ENCODE measurements at regions of chr1 and their contacts with region 1.

Region 1: GRCh38 chr1:45589861-45590260 is 6.0 kb downstream of the NASP start:
- DNase-seq: no peak
- H3K4me3 ChIP-seq: no peak overlapping the region
- H3K27ac ChIP-seq: peak overlapping the region; percentile 2
- H3K4me1 ChIP-seq: peaks cover 19% of the 10 kb centered on the region
- H3K27me3 ChIP-seq: no peaks in the 10 kb centered on the region
- CTCF ChIP-seq: no peak

Region 2: GRCh38 chr1:45033356-45033755 is 556.5 kb before region 1 on chr1:
- CTCF ChIA-PET with region 1: no interaction called
- POLR2A ChIA-PET with region 1: interaction called, 20 read pairs
- intact Hi-C with region 1: no loop called
- DNase-seq: no peak
- H3K4me3 ChIP-seq: no peak overlapping the region
- H3K27ac ChIP-seq: no peak overlapping the region
- H3K4me1 ChIP-seq: no peaks in the 10 kb centered on the region
- H3K27me3 ChIP-seq: no peaks in the 10 kb centered on the region
- CTCF ChIP-seq: no peak

Region 3: DNA sequence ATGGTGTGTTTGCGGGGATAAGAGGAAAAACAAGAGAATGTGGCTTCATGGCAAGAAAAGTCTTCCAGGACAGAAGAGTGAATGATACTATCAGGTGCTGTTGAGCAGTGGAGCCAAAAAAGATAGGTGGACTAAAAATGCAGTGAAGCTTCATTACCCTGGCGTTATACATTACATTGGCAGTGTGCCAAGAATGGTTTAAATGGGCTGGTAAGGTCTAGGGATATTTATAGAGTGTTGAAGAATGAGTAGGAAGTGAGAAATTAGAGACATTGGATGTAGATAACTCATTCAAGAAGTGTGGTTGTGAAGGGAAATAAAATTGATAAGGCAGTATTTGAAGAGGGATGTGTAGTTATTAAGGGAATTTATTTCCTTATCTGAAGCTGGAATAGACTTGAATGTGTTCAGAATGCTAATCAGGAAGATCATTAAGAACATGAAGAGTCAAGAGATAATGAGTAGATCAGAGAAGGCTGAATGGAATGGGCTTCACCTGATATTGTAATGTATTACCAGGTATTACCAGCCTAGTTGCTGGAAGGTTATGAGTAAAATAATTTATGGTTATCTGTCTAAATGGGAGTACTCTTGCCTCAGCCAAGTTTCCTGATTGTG is 286.2 kb after region 1 on chr1:
- CTCF ChIA-PET with region 1: no interaction called
- POLR2A ChIA-PET with region 1: interaction called, 13 read pairs
- intact Hi-C with region 1: no loop called
- DNase-seq: peak; percentile 41
- H3K4me3 ChIP-seq: no peak overlapping the region
- H3K27ac ChIP-seq: no peak overlapping the region
- H3K4me1 ChIP-seq: peaks cover 7% of the 10 kb centered on the region
- H3K27me3 ChIP-seq: no peaks in the 10 kb centered on the region
- CTCF ChIP-seq: no peak